ENCODE measurements at regions of chr7 and their contacts with region 1.

Region 1: GRCh38 chr7:80060218-80060806 is 74.3 kb upstream of the GNAI1 start:
- DNase-seq: peak; percentile 81
- H3K4me3 ChIP-seq: no peak overlapping the region
- H3K27ac ChIP-seq: no peak overlapping the region
- H3K4me1 ChIP-seq: no peaks in the 10 kb centered on the region
- H3K27me3 ChIP-seq: no peaks in the 10 kb centered on the region
- CTCF ChIP-seq: peak; percentile 10 to 15
- POLR2A ChIP-seq: no peak

Region 2: GRCh38 chr7:80047856-80048459 is 12.4 kb before region 1 on chr7:
- CTCF ChIA-PET with region 1: interaction called, 20 read pairs
- POLR2A ChIA-PET with region 1: no interaction called
- dilution Hi-C with region 1: no loop called
- intact Hi-C with region 1: no loop called
- DNase-seq: no peak
- H3K4me3 ChIP-seq: no peak overlapping the region
- H3K27ac ChIP-seq: no peak overlapping the region
- H3K4me1 ChIP-seq: no peaks in the 10 kb centered on the region
- H3K27me3 ChIP-seq: no peaks in the 10 kb centered on the region
- CTCF ChIP-seq: no peak
- POLR2A ChIP-seq: no peak

Region 3: DNA sequence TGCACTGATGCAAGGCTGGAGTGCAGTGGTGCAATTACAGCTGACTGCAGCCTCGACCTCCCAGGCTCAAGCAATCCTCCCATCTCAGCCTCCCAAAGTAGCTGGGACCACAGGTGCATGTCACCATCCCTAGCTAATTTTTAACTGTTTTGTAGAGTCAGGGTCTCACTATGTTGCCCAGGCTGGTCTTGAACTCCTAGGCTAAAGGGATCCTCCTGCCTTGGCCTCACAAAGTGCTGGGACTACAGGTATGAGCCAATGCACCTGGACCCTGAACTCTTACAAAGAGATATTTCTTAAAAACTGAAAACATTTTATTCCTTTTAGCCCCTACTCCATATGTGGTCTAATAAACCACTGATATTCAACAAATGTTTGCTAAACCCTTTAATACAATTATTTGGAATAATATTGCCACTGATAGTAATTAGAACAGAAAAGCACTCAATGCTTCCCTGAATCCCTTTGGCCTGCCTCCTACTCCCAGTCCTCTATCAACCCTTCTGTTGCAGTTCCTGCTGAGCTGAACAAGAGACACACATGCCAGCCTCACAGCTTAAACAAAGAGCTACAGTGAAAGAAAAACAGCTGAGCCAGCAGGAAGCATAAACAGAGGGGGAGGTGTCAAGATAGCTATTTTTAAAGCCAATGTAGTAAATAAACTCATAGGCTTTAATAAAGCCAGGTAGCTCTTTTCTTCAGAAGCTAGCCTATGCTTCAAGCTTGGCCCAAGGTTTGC is 67.3 kb after region 1 on chr7:
- CTCF ChIA-PET with region 1: interaction called, 10 read pairs
- POLR2A ChIA-PET with region 1: no interaction called
- dilution Hi-C with region 1: no loop called
- intact Hi-C with region 1: no loop called
- DNase-seq: no peak
- H3K4me3 ChIP-seq: no peak overlapping the region
- H3K27ac ChIP-seq: no peak overlapping the region
- H3K4me1 ChIP-seq: no peaks in the 10 kb centered on the region
- H3K27me3 ChIP-seq: peaks cover 2 to 4% of the 10 kb centered on the region in 2 experiments
- CTCF ChIP-seq: no peak
- POLR2A ChIP-seq: no peak

Region 4: DNA sequence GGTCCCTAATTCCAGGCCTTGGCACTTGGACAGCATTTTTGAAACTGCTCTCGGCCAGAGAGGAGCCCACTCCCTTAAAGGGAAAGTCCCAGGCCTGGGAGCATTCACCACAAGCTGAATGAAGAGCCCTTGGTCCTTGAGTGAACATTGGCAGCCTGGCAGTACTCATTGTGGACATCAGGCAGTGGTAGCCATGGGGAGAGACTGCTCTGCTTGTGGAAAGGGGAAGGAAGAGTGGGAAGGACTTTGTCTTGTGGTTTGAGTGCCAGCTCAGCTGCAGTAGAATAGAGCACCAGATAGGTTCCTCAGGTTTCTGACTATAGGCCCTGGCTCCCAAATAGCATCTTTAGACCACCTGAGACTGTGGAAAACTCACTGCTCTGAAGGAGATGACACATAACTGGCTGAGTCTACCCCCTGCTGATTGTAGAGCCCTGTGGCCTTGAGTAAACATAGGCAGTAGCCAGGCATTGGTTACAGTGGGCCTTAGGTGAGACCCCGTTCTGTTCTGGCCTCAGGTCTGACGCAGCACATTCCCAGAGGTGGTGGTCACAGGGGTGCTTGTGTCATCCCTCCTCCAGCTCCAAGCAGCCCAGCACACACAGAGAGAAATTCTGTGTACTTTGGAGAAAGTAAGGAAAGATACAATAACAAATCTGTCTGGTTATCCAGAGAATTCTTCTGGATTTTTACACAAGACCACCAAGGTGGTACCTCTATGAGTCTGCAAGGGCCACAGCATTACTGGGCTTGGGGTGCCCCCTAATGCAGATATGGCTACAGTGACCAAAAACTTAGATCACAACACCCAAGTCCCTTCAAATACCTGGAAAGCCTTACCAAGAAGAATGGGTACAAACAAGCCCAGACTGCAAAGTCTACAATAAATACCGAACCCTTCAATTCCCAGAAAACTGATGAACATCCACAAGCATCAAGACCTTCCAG is 228.1 kb after region 1 on chr7:
- CTCF ChIA-PET with region 1: interaction called, 4 read pairs
- POLR2A ChIA-PET with region 1: no interaction called
- dilution Hi-C with region 1: no loop called
- intact Hi-C with region 1: loop called (anchors 1 kb)
- DNase-seq: no peak
- H3K4me3 ChIP-seq: no peak overlapping the region
- H3K27ac ChIP-seq: no peak overlapping the region
- H3K4me1 ChIP-seq: no peaks in the 10 kb centered on the region
- H3K27me3 ChIP-seq: no peaks in the 10 kb centered on the region
- CTCF ChIP-seq: peak in 1 of 2 donors; percentile 8
- POLR2A ChIP-seq: no peak

Region 5: DNA sequence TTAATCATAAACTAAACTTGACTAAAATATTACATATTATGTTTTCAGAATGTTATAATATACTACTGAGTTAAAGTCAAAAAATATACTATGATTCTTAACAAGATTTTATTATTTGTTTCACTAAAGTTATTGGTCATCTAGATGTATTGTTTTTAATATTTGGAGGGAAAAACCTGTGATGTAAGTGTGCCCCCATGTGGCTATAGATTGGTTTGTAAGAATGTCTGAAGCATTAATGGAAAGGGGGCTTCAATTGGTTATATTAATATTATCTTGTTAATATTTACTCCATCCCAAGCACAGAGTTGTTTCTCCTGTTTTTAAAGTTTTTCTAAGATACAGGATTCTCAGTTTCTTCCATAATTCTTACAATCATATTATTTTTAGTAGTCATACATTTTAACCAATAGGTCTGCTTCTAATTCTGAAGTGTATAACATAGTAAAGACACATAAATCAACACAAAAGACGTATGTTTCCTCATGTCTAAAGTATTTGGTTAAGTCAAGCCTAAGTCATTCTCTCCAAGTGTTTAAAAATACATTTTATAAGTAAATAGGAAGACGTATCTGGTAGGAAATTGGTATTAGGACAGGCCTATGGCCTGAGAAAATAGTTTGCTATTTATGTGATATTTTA is 393.5 kb after region 1 on chr7:
- CTCF ChIA-PET with region 1: interaction called, 21 read pairs
- POLR2A ChIA-PET with region 1: no interaction called
- dilution Hi-C with region 1: no loop called
- intact Hi-C with region 1: loop called (anchors 1 kb)
- DNase-seq: peak; percentile 59
- H3K4me3 ChIP-seq: no peak overlapping the region
- H3K27ac ChIP-seq: no peak overlapping the region
- H3K4me1 ChIP-seq: no peaks in the 10 kb centered on the region
- H3K27me3 ChIP-seq: no peaks in the 10 kb centered on the region
- CTCF ChIP-seq: peak in 1 of 2 donors; percentile 29
- POLR2A ChIP-seq: no peak

Region 6: DNA sequence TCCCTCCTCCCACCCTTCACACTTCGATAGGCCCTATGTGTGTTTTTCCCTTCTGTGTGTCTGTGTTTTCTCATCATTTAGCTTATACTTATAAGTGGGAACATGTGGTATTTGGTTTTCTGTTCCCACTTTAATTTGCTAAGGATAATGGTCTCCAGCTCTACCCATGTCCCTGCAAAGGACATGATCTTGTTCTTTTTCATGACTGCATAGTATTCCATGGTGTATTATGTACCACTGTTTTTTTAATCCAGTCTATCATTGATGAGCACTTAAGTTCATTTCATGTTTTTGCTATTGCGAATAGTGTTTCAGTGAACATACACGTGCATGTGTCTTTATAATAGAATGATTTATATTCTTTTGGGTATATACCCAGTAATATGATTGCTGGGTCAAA is 497.8 kb after region 1 on chr7:
- CTCF ChIA-PET with region 1: no interaction called
- POLR2A ChIA-PET with region 1: no interaction called
- dilution Hi-C with region 1: no loop called
- intact Hi-C with region 1: no loop called
- DNase-seq: no peak
- H3K4me3 ChIP-seq: no peak overlapping the region
- H3K27ac ChIP-seq: no peak overlapping the region
- H3K4me1 ChIP-seq: no peaks in the 10 kb centered on the region
- H3K27me3 ChIP-seq: no peaks in the 10 kb centered on the region
- CTCF ChIP-seq: no peak
- POLR2A ChIP-seq: no peak

Region 7: DNA sequence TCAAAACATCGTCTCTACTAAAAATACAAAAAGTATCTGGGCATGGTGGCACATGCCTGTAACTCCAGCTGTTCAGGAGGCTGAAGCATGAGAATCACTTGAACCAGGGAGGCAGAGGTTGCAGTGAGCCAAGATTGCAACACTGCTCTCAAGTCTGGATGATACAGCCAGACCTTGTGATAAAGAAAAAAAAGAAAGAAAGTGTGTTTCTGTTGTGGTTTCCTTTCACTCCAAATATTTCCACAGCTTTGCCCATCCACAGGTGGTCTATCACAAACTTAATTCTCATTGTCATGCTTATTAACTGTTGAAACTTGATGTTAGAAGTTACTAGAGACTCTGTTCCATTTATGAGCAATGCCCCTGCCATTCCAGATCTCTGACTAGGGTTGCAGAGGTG is 1174.6 kb after region 1 on chr7:
- CTCF ChIA-PET with region 1: no interaction called
- POLR2A ChIA-PET with region 1: no interaction called
- dilution Hi-C with region 1: no loop called
- intact Hi-C with region 1: loop called (anchors 5 kb)
- DNase-seq: no peak
- H3K4me3 ChIP-seq: no peak overlapping the region
- H3K27ac ChIP-seq: no peak overlapping the region
- H3K4me1 ChIP-seq: no peaks in the 10 kb centered on the region
- H3K27me3 ChIP-seq: peaks cover 0 to 3% of the 10 kb centered on the region in 2 experiments
- CTCF ChIP-seq: no peak
- POLR2A ChIP-seq: no peak

Measured in endothelial cell of umbilical vein (primary cell).